ENCODE measurements at regions of chr2 and their contacts with region 1.

Region 1: GRCh38 chr2:127701193-127701650 is at the start of gene SFT2D3:
- DNase-seq: peak; percentile 82 to 96 (median 88)
- ATAC-seq: peak; percentile 73
- H3K4me3 ChIP-seq: peak within 1 kb of the TSS; percentile 83
- H3K4me3 Mint-ChIP-seq: peak within 1 kb of the TSS; percentile 97
- H3K27ac ChIP-seq: peak within 1 kb of the TSS; percentile 82 to 94
- H3K27ac Mint-ChIP-seq: peak within 1 kb of the TSS; percentile 99
- H3K4me1 ChIP-seq: peaks cover 36% of the 10 kb centered on the region
- H3K4me1 Mint-ChIP-seq: peaks cover 50% of the 10 kb centered on the region
- H3K27me3 ChIP-seq: no peaks in the 10 kb centered on the region
- H3K27me3 Mint-ChIP-seq: no peaks in the 10 kb centered on the region
- CTCF ChIP-seq: no peak
- total RNA-seq, gene SFT2D3: 8.5 to 8.9 TPM

Region 2: DNA sequence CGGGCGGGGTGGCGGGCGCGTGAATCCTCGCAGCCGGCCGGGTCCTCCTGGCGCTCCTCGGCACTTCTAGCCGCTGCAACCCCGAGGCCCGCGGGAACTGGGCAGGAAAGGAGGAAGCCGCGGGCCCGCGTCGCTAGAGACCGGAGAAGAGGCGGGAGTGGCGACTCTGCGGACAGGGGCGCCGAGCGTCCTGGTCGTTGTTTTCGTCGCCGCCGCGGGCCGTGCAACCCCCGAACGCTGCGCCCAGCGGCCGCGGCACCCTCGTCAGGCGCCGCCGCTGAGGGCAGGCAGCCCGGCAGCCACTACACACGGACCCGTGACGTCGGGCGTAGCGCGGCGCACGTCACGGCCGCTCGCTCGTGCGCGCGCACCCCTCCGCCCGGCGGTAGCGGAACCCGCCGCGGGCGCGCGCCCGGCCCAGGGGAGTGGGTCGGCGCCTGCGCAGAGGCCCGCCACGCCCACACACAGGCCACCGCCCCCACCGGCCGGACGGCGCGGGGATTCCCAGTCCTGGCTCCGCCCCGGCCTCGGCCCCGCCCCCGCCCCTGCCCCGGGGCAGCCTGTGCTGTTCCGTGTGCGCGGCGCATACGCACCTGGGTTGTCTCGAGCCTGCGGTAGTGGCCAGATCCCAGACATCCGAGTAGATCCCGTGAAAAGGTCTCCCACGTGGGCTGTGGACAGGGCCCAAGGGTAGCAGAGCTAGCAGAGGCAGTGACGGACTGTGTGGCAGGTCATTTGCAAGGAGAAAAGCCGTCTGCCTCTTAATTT is 313.4 kb before region 1 on chr2 and contains the start of gene MAP3K2:
- CTCF ChIA-PET with region 1: no interaction called
- POLR2A ChIA-PET with region 1: interaction called, 4 read pairs
- intact Hi-C with region 1: loop called in 1 of 2 experiments (anchors 2 kb)
- DNase-seq: peak; percentile 87 to 99 (median 96)
- ATAC-seq: peak; percentile 69
- H3K4me3 ChIP-seq: peak within 1 kb of the TSS; percentile 82
- H3K4me3 Mint-ChIP-seq: peak within 1 kb of the TSS; percentile 98
- H3K27ac ChIP-seq: peak within 1 kb of the TSS; percentile 99 to 100
- H3K27ac Mint-ChIP-seq: peak within 1 kb of the TSS; percentile 100
- H3K4me1 ChIP-seq: peaks cover 33% of the 10 kb centered on the region
- H3K4me1 Mint-ChIP-seq: peaks cover 69% of the 10 kb centered on the region
- H3K27me3 ChIP-seq: no peaks in the 10 kb centered on the region
- H3K27me3 Mint-ChIP-seq: no peaks in the 10 kb centered on the region
- CTCF ChIP-seq: no peak
- total RNA-seq, gene MAP3K2: 103 to 105 TPM

Region 3: GRCh38 chr2:127471286-127471988 is 229.8 kb before region 1 on chr2:
- CTCF ChIA-PET with region 1: no interaction called
- POLR2A ChIA-PET with region 1: no interaction called
- intact Hi-C with region 1: no loop called
- DNase-seq: no peak
- ATAC-seq: no peak
- H3K4me3 ChIP-seq: no peak overlapping the region
- H3K4me3 Mint-ChIP-seq: no peak overlapping the region
- H3K27ac ChIP-seq: no peak overlapping the region
- H3K27ac Mint-ChIP-seq: no peak overlapping the region
- H3K4me1 ChIP-seq: no peaks in the 10 kb centered on the region
- H3K4me1 Mint-ChIP-seq: no peaks in the 10 kb centered on the region
- H3K27me3 ChIP-seq: no peaks in the 10 kb centered on the region
- H3K27me3 Mint-ChIP-seq: no peaks in the 10 kb centered on the region
- CTCF ChIP-seq: no peak

Region 4: DNA sequence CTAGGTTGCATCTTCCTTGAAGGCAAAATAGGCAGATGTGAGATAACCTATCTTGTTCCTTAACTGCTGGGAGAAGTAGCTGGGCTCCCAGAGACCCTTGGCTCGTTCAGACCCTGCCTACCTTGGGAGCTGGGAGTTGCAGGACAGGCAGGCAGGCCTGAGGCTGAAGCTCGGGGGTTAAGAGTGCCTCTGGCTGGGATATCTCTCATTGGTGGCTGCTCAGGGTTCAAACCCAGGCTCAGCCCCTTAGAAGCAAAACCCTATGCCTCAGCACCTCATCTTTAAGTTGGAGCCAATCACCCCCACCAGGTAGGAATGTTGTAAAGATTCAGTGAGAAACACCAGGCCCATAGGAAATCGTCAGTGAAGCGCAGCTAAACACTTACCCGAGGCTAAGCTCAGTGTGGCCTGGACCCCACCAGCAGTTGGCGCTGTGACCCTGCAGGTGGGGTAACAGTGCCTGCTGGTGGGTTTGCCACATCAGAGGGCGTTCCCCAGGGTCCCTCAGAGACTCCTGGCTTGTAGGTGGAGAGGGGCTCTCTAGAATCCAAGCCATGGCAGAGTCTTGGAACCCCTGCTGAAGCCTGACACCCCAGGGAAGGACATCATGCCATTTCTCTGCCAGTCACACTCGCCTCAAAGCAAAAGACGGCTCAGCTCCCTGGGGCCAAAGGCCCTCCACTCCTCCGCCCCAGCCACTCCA is 109.8 kb before region 1 on chr2:
- CTCF ChIA-PET with region 1: interaction called, 6 read pairs
- POLR2A ChIA-PET with region 1: interaction called, 16 read pairs
- intact Hi-C with region 1: loop called in 1 of 2 experiments (anchors 2 kb)
- DNase-seq: peak; percentile 45 to 83 (median 61)
- ATAC-seq: peak; percentile 99
- H3K4me3 ChIP-seq: no peak overlapping the region
- H3K4me3 Mint-ChIP-seq: no peak overlapping the region
- H3K27ac ChIP-seq: no peak overlapping the region
- H3K27ac Mint-ChIP-seq: no peak overlapping the region
- H3K4me1 ChIP-seq: peaks cover 5% of the 10 kb centered on the region
- H3K4me1 Mint-ChIP-seq: peaks cover 16% of the 10 kb centered on the region
- H3K27me3 ChIP-seq: no peaks in the 10 kb centered on the region
- H3K27me3 Mint-ChIP-seq: no peaks in the 10 kb centered on the region
- CTCF ChIP-seq: peak; percentile 80

Region 5: DNA sequence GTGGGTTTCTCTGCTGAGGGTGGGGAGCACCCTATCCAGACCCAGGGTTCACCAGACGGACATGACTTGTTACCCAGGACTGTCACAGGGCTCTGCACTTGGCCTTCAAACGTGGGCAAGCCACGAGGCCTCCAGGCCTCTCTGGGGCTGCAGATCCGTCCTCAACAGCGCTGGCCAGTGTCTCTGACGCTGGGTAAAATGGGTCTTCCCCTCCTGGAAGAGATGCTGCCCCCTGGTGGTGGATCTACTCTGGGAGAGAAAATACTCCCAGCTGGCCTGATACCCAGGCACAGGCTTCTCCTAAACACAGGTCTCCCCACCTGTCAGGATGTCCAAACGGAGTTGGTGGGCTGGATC is 51.6 kb before region 1 on chr2:
- CTCF ChIA-PET with region 1: interaction called, 4 read pairs
- POLR2A ChIA-PET with region 1: interaction called, 10 read pairs
- intact Hi-C with region 1: loop called (anchors 5 kb)
- DNase-seq: peak; percentile 74 to 97 (median 85)
- ATAC-seq: peak; percentile 81
- H3K4me3 ChIP-seq: no peak overlapping the region
- H3K4me3 Mint-ChIP-seq: peak overlapping the region; percentile 56
- H3K27ac ChIP-seq: no peak overlapping the region
- H3K27ac Mint-ChIP-seq: peak overlapping the region; percentile 81
- H3K4me1 ChIP-seq: peaks cover 20% of the 10 kb centered on the region
- H3K4me1 Mint-ChIP-seq: peaks cover 35% of the 10 kb centered on the region
- H3K27me3 ChIP-seq: no peaks in the 10 kb centered on the region
- H3K27me3 Mint-ChIP-seq: no peaks in the 10 kb centered on the region
- CTCF ChIP-seq: peak; percentile 88

Region 6: DNA sequence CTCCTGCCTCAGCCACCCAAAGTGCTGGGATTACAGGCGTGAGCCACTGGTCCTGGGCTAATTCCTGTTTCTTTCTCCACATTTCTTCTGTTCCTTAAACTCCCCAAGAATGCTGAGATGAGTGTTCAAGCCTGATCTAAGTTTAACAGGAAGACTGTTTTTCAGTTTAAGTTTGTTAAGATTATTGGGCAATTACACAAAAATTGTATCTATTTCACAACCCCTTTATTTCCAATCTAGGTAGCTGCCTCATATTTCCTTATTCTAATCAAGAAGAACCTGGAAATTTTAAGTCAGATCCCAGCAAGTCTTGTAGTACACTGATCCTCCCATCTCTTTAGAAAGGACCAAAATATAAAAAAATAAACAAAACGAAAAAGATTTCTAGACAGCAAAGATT is 11.8 kb after region 1 on chr2:
- CTCF ChIA-PET with region 1: interaction called, 3 read pairs
- POLR2A ChIA-PET with region 1: interaction called, 15 read pairs
- intact Hi-C with region 1: no loop called
- DNase-seq: no peak
- ATAC-seq: no peak
- H3K4me3 ChIP-seq: no peak overlapping the region
- H3K4me3 Mint-ChIP-seq: no peak overlapping the region
- H3K27ac ChIP-seq: no peak overlapping the region
- H3K27ac Mint-ChIP-seq: no peak overlapping the region
- H3K4me1 ChIP-seq: no peaks in the 10 kb centered on the region
- H3K4me1 Mint-ChIP-seq: no peaks in the 10 kb centered on the region
- H3K27me3 ChIP-seq: no peaks in the 10 kb centered on the region
- H3K27me3 Mint-ChIP-seq: no peaks in the 10 kb centered on the region
- CTCF ChIP-seq: no peak

Region 7: GRCh38 chr2:127810619-127811396 is 109.6 kb after region 1 on chr2 and contains the start of gene WDR33:
- CTCF ChIA-PET with region 1: no interaction called
- POLR2A ChIA-PET with region 1: interaction called, 18 read pairs
- intact Hi-C with region 1: loop called (anchors 2 kb)
- DNase-seq: peak; percentile 89 to 98 (median 93)
- ATAC-seq: peak; percentile 96
- H3K4me3 ChIP-seq: peak within 1 kb of the TSS; percentile 83
- H3K4me3 Mint-ChIP-seq: peak within 1 kb of the TSS; percentile 97
- H3K27ac ChIP-seq: peak within 1 kb of the TSS; percentile 95 to 97
- H3K27ac Mint-ChIP-seq: peak within 1 kb of the TSS; percentile 99
- H3K4me1 ChIP-seq: peaks cover 36% of the 10 kb centered on the region
- H3K4me1 Mint-ChIP-seq: peaks cover 54% of the 10 kb centered on the region
- H3K27me3 ChIP-seq: no peaks in the 10 kb centered on the region
- H3K27me3 Mint-ChIP-seq: no peaks in the 10 kb centered on the region
- CTCF ChIP-seq: no peak
- total RNA-seq, gene WDR33: 59.8 to 61.5 TPM

Region 8: DNA sequence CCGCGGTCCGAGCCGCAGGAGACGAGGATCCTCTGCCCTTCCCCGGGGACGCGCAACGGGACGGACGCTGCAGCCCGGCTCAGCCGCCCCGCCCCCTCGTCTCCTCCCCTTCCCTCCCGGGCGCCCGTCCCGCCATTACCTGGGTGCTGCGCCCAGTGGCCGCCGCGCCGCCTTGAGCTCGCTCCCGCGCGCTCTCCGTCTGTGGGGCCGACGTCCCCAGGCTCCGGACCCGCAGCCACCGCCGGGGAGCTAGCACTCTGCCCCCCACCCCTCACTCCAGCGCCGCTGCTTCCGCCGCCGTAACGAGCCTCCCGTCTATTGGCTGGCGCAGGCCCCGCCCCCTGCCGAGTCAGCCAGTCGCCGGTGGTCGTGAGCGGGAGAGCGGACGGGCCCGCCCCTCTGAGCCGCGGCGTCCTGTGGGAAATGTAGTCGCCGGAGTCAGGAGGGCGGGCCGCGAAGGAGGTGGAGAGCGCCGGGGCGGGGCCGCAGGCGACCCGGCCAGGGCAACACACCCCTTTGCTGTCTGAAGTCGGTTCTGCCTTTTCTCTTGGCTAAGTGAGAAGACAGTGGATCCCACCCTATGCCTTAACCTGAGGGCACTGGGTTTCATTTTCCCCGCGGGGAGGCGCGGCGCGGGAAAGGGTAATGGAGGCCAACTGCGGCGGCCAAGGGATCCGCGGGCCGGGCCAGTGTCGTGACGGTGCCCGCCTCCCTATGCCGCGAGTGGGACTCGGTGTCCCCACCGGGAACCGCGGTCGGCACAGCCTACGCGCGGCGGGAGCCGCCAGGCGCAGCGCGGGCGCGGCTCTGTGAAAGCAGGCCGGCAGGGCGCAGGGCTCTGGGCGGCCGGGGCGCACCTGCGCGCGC is 326.8 kb after region 1 on chr2 and contains the start of gene SAP130:
- CTCF ChIA-PET with region 1: no interaction called
- POLR2A ChIA-PET with region 1: interaction called, 14 read pairs
- intact Hi-C with region 1: loop called in 1 of 2 experiments (anchors 5 kb)
- DNase-seq: peak; percentile 96 to 99 (median 98)
- ATAC-seq: peak; percentile 76
- H3K4me3 ChIP-seq: peak within 1 kb of the TSS; percentile 77
- H3K4me3 Mint-ChIP-seq: peak within 1 kb of the TSS; percentile 99
- H3K27ac ChIP-seq: peak within 1 kb of the TSS; percentile 85 to 89
- H3K27ac Mint-ChIP-seq: peak within 1 kb of the TSS; percentile 96
- H3K4me1 ChIP-seq: peaks cover 15% of the 10 kb centered on the region
- H3K4me1 Mint-ChIP-seq: peaks cover 30% of the 10 kb centered on the region
- H3K27me3 ChIP-seq: no peaks in the 10 kb centered on the region
- H3K27me3 Mint-ChIP-seq: no peaks in the 10 kb centered on the region
- CTCF ChIP-seq: no peak
- total RNA-seq, gene SAP130: 19.2 to 21.0 TPM

Measured in CD4-positive, alpha-beta T cell (primary cell).